Activated T-helper 1 cell treated with anti-CD3 and anti-CD28 coated beads, Interleukin-12 subunit alpha, Interleukin-12 subunit beta, Interleukin-2, Interleukin-4 antibody, amounts not matched to agents 30 ng/mL and 10 ng/mL and 1 ng/mL, durations not matched to agents 14 hours and 24 hours and 36 hours (primary cell): ENCODE measurements at regions of chr6 and their contacts with region 1.

Region 1: GRCh38 chr6:36196880-36197548 is 470 bp downstream of the BRPF3 start:
- DNase-seq: peak; percentile 99
- H3K4me3 Mint-ChIP-seq: peak overlapping the region; percentile 89
- H3K27ac Mint-ChIP-seq: peak overlapping the region; percentile 87
- H3K4me1 Mint-ChIP-seq: peaks cover 40% of the 10 kb centered on the region
- H3K27me3 Mint-ChIP-seq: peaks cover 3% of the 10 kb centered on the region

Region 2: DNA sequence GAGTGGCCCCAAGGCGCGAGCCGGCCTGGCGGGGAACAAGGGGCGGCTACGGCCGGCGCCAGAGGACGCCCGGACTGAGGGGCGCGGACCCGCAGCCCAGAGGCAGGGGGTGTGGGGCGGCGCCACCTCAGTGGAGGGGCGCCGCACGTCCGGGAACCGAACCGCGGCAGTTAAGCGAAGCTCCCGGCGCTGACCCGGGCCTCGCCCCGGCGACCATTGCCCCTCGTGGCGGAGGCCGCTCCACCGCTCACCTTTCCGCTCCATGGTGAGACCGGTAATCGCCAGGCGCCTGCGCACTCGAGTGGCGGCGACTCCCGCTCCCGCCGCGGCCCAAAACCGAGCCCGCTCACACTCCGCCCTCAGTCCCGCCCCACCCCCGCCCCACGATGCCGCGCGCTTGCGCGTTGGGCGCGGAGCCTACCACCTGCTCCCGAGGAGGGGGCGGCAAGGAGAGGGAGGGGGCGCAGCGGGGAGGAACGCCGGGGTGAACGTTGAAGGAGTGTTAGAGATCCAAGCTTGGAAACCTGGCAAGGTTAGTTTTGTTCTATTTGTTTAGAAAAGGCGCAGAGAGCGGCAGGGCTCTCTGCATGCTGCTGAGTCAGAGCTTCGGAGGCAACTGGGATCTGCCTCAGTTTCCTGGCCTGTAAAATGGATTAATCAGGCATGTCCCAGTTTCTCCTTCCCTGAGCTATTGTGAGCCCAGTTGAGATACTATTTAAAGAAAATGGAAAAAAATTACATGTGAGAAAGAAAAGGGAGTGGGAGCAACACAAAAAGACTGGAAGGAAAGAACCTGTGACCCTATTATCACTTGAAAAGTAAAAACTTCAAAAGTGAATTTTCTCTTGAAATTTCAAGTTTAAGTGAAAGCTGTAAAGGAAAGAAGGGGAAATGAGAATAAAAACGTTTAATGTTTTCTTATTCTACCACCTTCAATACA is 276.0 kb before region 1 on chr6 and contains the start of gene SRPK1:
- intact Hi-C with region 1: loop called (anchors 1 kb)
- DNase-seq: peak; percentile 85
- H3K4me3 Mint-ChIP-seq: peak within 1 kb of the TSS; percentile 96
- H3K27ac Mint-ChIP-seq: peak within 1 kb of the TSS; percentile 93
- H3K4me1 Mint-ChIP-seq: peaks cover 49% of the 10 kb centered on the region
- H3K27me3 Mint-ChIP-seq: no peaks in the 10 kb centered on the region
- total RNA-seq, gene SRPK1: 149 and 182 TPM in 2 replicates

Region 3: GRCh38 chr6:36123257-36124139 is 73.5 kb before region 1 on chr6:
- intact Hi-C with region 1: loop called (anchors 1 kb)
- DNase-seq: peak; percentile 88
- H3K4me3 Mint-ChIP-seq: peak overlapping the region; percentile 0
- H3K27ac Mint-ChIP-seq: peak overlapping the region; percentile 74
- H3K4me1 Mint-ChIP-seq: peaks cover 89% of the 10 kb centered on the region
- H3K27me3 Mint-ChIP-seq: no peaks in the 10 kb centered on the region

Region 4: GRCh38 chr6:36169023-36170007 is 27.7 kb before region 1 on chr6:
- intact Hi-C with region 1: loop called (anchors 1 kb)
- DNase-seq: no peak
- H3K4me3 Mint-ChIP-seq: peak overlapping the region; percentile 20
- H3K27ac Mint-ChIP-seq: peak overlapping the region; percentile 64
- H3K4me1 Mint-ChIP-seq: peaks cover 27% of the 10 kb centered on the region
- H3K27me3 Mint-ChIP-seq: peaks cover 2% of the 10 kb centered on the region

Region 5: DNA sequence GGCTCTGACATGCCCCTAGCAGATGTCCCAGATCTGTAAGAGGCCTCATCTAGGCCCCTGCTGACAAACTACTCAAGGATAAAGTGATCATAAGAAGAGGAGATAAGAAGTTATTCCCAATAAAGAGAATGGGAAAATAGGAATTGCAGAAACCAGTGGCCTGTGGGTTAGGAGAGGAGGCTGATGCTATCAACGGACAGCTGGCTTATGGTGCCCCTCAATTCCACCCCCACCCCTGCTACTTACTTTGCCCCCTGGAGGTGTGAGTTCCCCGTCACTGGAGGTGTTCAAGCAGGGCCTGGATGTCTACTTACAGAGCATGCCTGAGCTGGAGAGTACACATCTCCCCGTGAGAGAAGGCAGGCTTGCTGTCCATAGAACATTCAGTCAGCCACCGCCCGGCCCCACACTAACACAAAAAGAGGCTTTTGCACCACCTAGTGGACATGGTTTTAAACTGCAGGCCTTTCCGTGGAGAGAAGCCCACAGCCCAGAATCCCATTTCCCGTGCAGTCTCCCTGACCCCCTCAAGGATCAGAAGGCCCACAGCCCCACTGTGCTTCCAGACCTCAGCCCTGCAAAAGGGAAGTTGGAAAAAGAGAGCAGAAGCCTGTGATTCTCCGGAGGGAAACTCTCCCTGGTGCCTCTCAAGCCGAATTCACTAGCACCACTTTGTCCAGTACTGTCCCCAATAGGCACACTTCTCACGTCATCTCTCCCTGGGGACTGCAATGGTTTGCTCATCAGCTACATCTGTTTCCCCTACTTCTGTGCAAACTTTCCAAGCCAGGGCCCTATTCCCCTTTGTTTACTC is 163.4 kb after region 1 on chr6:
- intact Hi-C with region 1: loop called (anchors 2 kb)
- DNase-seq: peak; percentile 56
- H3K4me3 Mint-ChIP-seq: no peak overlapping the region
- H3K27ac Mint-ChIP-seq: no peak overlapping the region
- H3K4me1 Mint-ChIP-seq: peaks cover 45% of the 10 kb centered on the region
- H3K27me3 Mint-ChIP-seq: peaks cover 16% of the 10 kb centered on the region

Region 6: DNA sequence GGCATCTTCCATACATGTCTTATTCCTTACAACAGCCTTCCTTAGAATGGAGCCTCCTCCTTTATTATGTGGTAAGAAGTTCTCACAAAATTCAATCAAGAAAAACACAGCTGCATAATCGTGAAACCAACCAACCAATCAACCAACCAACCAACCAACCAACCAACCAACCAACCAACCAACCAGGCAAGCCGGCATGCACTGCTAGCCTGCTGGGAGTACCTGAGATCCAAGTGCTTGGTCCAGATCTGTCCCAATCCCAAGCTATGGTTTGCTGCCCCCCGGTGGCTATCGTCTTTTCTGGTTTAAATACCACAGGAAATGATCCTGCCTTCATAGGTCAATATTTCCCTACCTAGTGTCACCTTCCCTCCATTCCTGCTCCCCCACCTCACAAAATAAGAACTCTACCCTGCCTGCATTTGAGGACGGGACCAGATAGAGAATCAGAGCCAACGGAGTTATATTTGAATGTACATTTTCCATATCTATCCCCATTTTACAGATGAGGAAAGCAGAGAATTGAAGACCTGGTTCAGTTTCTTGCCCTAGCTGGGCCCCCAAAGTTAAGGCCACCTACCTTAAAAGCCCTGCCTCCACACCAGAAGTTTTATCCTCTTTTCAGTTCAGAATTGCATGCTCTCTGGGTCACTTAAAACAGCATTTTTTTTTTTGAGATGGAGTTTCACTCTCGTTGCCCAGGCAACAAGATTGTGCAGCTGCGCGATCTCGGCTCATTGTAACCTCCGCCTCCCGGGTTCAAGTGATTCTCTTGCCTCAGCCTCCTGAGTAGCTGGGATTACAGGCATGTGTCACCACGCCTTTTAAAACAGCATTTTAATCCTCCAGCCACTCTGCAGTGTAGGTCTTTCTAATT is 527.7 kb after region 1 on chr6:
- intact Hi-C with region 1: no loop called
- DNase-seq: peak; percentile 13
- H3K4me3 Mint-ChIP-seq: no peak overlapping the region
- H3K27ac Mint-ChIP-seq: no peak overlapping the region
- H3K4me1 Mint-ChIP-seq: peaks cover 47% of the 10 kb centered on the region
- H3K27me3 Mint-ChIP-seq: no peaks in the 10 kb centered on the region